ENCODE measurements at regions of chr22 and their contacts with region 1.

Region 1: DNA sequence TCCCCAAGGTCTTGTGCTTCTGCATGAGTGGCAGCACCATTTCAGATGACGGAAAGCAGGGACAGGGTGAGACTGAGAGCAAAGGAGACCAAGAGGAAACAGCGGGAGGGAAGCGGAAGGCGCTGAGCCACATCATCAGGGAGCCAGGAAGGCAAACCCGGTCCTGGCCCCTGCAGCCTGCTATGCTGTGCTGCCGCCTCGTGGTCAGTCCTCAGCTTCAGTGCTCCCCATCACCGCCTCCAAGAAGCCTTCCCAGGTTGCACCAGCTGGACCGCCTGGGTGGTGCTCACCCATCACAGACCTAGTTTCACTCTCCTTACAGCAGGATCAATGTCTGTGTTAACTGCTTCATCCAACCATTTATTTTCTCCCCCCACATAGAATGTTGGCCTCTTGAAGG is 73.0 kb upstream of the PHF21B start:
- DNase-seq: no peak
- ATAC-seq: 0 out of 2 replicates have a peak, but pooled peaks have one; percentile 24
- H3K4me3 ChIP-seq: no peak overlapping the region
- H3K27ac ChIP-seq: no peak overlapping the region
- H3K4me1 ChIP-seq: peaks cover 6% of the 10 kb centered on the region
- H3K27me3 ChIP-seq: no peaks in the 10 kb centered on the region
- CTCF ChIP-seq: peak; percentile 60

Region 2: DNA sequence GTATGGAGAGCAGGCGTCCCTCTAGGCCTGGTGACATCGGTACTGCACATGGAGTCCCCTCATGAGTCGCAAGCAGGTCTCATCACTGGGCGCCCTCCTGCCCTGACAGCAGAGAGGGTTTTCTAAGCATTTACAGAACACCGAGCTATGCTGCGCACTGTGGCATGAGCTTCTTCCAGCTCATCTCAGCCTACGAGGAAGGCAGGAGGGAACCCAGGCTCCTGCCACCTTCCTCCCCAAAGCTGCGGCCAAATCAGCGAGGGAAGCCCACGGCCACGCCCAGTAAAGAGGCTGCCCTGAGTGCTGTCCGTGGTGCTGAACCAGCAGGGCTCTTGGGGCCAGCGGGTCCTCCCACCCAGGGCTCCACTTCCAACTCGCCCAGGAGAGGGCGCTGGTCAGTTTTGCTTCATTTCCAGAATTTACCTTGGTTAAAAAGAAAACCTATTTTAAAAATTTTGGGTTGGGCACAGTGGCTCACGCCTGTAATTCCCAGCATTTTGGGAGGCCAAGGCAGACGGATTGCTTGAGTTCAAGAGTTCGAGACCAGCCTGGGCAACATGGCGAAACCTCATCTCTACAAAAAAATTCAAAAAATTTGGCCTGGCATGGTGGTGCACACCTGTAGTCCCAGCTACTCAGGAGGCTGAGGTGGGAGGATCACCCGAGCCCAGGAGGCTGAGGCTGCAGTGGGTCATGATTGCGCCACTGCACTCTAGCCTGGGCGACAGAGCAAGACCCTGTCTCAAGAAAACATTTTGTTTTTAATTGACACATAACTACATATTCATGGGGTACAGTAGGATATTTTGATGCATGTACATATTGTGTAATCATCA is 107.2 kb before region 1 on chr22:
- CTCF ChIA-PET with region 1: no interaction called
- POLR2A ChIA-PET with region 1: no interaction called
- in situ Hi-C with region 1: no loop called
- intact Hi-C with region 1: loop called (anchors 5 kb)
- DNase-seq: peak; percentile 8
- ATAC-seq: peak; percentile 91
- H3K4me3 ChIP-seq: no peak overlapping the region
- H3K27ac ChIP-seq: no peak overlapping the region
- H3K4me1 ChIP-seq: no peaks in the 10 kb centered on the region
- H3K27me3 ChIP-seq: no peaks in the 10 kb centered on the region
- CTCF ChIP-seq: peak; percentile 84

Region 3: DNA sequence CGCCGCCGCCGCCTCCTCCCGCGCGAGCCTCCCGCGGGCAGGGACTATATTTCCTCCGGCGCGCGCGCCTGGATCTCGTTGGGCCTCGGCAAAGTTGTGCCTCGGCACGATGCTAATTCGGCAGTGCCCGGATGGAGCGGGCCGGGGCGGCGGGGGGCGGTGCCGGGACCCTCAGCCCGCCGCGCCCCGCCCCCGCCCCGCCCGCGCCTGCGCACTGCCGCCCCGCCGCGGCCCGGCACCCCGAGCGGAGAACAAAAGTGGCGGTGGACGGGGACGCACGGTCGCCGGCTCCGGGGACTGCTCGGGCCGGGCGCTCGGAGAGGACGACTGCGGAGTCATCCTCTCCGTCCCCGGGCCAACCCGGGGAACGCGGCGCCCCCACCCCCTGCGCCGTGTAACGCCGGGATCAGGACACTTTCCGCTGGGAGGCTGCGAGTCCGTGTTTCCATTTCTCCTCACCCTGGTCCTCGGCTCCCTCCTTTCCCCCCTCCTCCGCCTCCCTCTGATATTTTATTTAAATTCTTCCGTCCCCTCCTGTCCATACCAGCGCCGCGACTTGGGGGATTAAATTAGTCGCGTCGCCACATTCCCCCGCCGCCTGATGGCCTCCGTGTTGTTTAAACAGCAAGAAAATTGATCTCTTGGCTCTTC is 72.8 kb before region 1 on chr22 and contains the start of gene PHF21B:
- CTCF ChIA-PET with region 1: no interaction called
- POLR2A ChIA-PET with region 1: no interaction called
- in situ Hi-C with region 1: no loop called
- intact Hi-C with region 1: no loop called
- DNase-seq: no peak
- ATAC-seq: peak; percentile 79
- H3K4me3 ChIP-seq: peak within 1 kb of the TSS; percentile 63 to 72
- H3K27ac ChIP-seq: peak within 1 kb of the TSS; percentile 70
- H3K4me1 ChIP-seq: 0 out of 2 replicates have a peak, but pooled peaks cover 5% of the 10 kb centered on the region
- H3K27me3 ChIP-seq: no peaks in the 10 kb centered on the region
- CTCF ChIP-seq: no peak
- total RNA-seq, gene PHF21B: 4.5 TPM

Region 4: GRCh38 chr22:45163451-45164269 is 80.9 kb after region 1 on chr22 and contains the start of gene NUP50:
- CTCF ChIA-PET with region 1: no interaction called
- POLR2A ChIA-PET with region 1: no interaction called
- in situ Hi-C with region 1: no loop called
- intact Hi-C with region 1: no loop called
- DNase-seq: peak; percentile 74
- ATAC-seq: peak; percentile 93
- H3K4me3 ChIP-seq: peak within 1 kb of the TSS; percentile 80 to 90
- H3K27ac ChIP-seq: peak within 1 kb of the TSS; percentile 91
- H3K4me1 ChIP-seq: peaks cover 18% of the 10 kb centered on the region
- H3K27me3 ChIP-seq: no peaks in the 10 kb centered on the region
- CTCF ChIP-seq: no peak
- total RNA-seq, gene NUP50: 52.1 TPM